Activated CD4-positive, alpha-beta T cell treated with anti-CD3 and anti-CD28 coated beads for 36 hours (primary cell): ENCODE measurements at regions of chrX and their contacts with region 1.

Region 1: DNA sequence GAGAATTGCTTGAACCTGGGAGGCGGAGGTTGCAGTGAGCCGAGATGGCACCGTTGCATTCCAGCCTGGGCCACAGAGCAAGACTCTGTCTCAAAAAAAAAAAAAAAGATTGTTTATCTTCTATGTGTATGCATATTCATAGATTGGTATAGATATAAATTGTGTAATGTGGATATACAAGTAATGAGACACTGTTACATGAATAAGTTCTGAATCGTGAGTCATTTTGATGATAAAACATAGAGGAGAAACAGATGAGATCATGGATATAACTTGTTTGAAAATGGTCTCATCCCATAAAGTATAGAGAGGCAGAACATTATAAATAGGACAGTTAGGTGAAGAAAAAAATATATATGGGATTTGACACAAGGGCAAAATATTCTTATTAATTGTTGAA is 628.0 kb downstream of the IL1RAPL1 start:
- DNase-seq: no peak
- ATAC-seq: no peak
- H3K4me3 Mint-ChIP-seq: no peak overlapping the region
- H3K27ac Mint-ChIP-seq: no peak overlapping the region
- H3K4me1 Mint-ChIP-seq: no peaks in the 10 kb centered on the region
- H3K27me3 Mint-ChIP-seq: no peaks in the 10 kb centered on the region

Region 2: GRCh38 chrX:28946846-28947245 is 268.4 kb before region 1 on chrX:
- CTCF ChIA-PET with region 1: no interaction called
- POLR2A ChIA-PET with region 1: no interaction called
- intact Hi-C with region 1: no loop called
- DNase-seq: no peak
- ATAC-seq: no peak
- H3K4me3 Mint-ChIP-seq: no peak overlapping the region
- H3K27ac Mint-ChIP-seq: no peak overlapping the region
- H3K4me1 Mint-ChIP-seq: no peaks in the 10 kb centered on the region
- H3K27me3 Mint-ChIP-seq: no peaks in the 10 kb centered on the region

Region 3: GRCh38 chrX:29155286-29155685 is 60.0 kb before region 1 on chrX:
- CTCF ChIA-PET with region 1: no interaction called
- POLR2A ChIA-PET with region 1: no interaction called
- intact Hi-C with region 1: loop called in 1 of 2 experiments (anchors 10 kb)
- DNase-seq: no peak
- ATAC-seq: no peak
- H3K4me3 Mint-ChIP-seq: no peak overlapping the region
- H3K27ac Mint-ChIP-seq: no peak overlapping the region
- H3K4me1 Mint-ChIP-seq: no peaks in the 10 kb centered on the region
- H3K27me3 Mint-ChIP-seq: no peaks in the 10 kb centered on the region

Region 4: GRCh38 chrX:29241809-29242208 is 26.6 kb after region 1 on chrX:
- CTCF ChIA-PET with region 1: no interaction called
- POLR2A ChIA-PET with region 1: no interaction called
- intact Hi-C with region 1: no loop called
- DNase-seq: no peak
- ATAC-seq: no peak
- H3K4me3 Mint-ChIP-seq: no peak overlapping the region
- H3K27ac Mint-ChIP-seq: no peak overlapping the region
- H3K4me1 Mint-ChIP-seq: no peaks in the 10 kb centered on the region
- H3K27me3 Mint-ChIP-seq: no peaks in the 10 kb centered on the region